K562 (cell line): ENCODE measurements at regions of chr6 and their contacts with region 1.

Region 1: GRCh38 chr6:35297601-35298481 is at the start of gene DEF6:
- DNase-seq: peak; percentile 94 to 97 (median 96)
- ATAC-seq: peak; percentile 96
- H3K4me3 ChIP-seq: peak within 1 kb of the TSS; percentile 65
- H3K27ac ChIP-seq: peak within 1 kb of the TSS; percentile 81
- H3K4me1 ChIP-seq: peaks cover 31 to 37% of the 10 kb centered on the region in 2 experiments
- H3K27me3 ChIP-seq: no peaks in the 10 kb centered on the region
- CTCF ChIP-seq: peak; percentile 97 to 99 (median 99)
- EP300 ChIP-seq: peak; percentile 89
- POLR2A ChIP-seq: peak; percentile 77
- RAD21 ChIP-seq: peak; percentile 100
- polyA plus RNA-seq, gene DEF6: 1.3 to 1.4 TPM

Region 2: DNA sequence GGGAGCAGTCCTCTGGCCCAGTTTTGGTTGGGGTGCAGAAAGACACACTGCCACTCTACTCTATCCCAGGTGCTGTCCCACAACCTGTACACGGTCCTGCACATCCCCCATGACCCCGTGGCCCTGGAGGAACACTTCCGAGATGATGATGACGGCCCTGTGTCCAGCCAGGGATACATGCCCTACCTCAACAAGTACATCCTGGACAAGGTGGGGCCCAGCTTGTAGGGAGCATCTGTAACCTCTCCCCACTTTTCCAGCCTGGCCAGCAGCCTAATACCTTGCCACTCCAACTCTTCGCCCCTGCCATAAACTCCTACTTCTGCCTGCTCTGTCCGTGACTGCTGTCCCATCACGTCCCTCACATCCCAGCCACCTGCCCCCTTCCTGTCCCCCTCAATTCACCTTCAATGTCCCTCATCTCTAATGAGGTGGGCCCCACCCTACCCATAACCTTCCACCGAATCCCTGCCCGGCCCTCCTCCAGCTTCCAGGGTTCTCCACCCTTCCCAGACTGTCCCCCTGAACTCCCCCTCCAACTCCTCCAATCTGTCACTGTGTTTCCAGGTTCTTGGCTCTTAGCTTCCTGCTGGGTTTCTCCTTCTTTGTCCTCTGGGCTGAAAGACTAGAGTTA is 11.9 kb after region 1 on chr6:
- CTCF ChIA-PET with region 1: interaction called, 3 read pairs
- POLR2A ChIA-PET with region 1: interaction called, 10 read pairs
- in situ Hi-C with region 1: no loop called
- intact Hi-C with region 1: no loop called
- DNase-seq: no peak
- ATAC-seq: no peak
- H3K4me3 ChIP-seq: no peak overlapping the region
- H3K27ac ChIP-seq: no peak overlapping the region
- H3K4me1 ChIP-seq: peaks cover 4 to 15% of the 10 kb centered on the region in 2 experiments; a peak in 4 of 5 replicates
- H3K27me3 ChIP-seq: no peaks in the 10 kb centered on the region
- CTCF ChIP-seq: no peak
- EP300 ChIP-seq: no peak
- POLR2A ChIP-seq: no peak
- RAD21 ChIP-seq: no peak

Region 3: DNA sequence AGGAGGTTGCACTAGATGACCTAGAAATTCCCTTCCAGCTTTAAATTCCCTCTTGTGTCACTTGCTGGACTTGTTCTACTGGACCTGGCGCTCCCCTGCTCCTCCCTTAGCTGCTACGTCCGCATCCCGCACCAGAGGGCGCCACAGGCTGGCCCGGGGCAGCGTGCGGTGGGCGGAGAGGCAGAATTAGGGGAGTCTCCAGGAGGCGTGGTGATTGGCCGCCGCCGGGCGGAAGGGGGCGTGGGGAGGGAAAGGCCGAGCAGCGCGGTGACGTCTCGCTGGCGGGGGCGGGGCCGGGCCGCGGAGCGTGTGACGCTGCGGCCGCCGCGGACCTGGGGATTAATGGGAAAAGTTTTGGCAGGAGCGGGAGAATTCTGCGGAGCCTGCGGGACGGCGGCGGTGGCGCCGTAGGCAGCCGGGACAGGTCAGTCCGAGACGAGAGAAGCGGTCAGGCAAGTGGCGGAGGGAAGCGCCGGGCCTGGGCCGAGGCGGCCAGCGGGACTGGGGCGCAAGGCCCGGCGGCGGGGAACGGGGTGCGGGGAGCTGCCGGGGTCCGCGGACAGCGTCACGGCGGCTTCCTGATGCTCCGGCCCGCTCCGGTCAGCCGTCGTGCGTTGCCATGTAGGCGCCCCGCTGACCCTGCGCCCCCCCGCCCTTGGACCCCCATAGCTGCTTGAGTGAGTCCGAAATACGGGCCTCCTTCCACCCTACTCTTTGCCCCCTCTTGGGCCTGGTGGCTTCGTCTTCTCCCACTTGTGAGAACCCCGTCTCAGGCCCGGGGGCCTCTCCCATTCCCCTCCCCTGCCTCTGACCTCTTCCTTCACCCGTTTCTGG is 44.6 kb after region 1 on chr6 and contains the start of gene PPARD:
- CTCF ChIA-PET with region 1: interaction called, 3 read pairs
- POLR2A ChIA-PET with region 1: interaction called, 5 read pairs
- in situ Hi-C with region 1: no loop called
- intact Hi-C with region 1: loop called (anchors 1 kb)
- DNase-seq: peak; percentile 99 to 100 (median 100)
- ATAC-seq: peak; percentile 97
- H3K4me3 ChIP-seq: peak within 1 kb of the TSS; percentile 73
- H3K27ac ChIP-seq: peak within 1 kb of the TSS; percentile 72
- H3K4me1 ChIP-seq: peaks cover 26 to 28% of the 10 kb centered on the region in 2 experiments; a peak in 4 of 5 replicates
- H3K27me3 ChIP-seq: peaks cover 0 to 6% of the 10 kb centered on the region in 2 experiments; a peak in 2 of 5 replicates
- CTCF ChIP-seq: peak; percentile 98 to 99 (median 99)
- EP300 ChIP-seq: peak; percentile 16; the same call in 1 of the 2 replicates
- POLR2A ChIP-seq: peak; percentile 65; the same call in 1 of the 2 replicates
- RAD21 ChIP-seq: peak; percentile 100
- polyA plus RNA-seq, gene PPARD: 0.14 to 0.18 TPM

Region 4: DNA sequence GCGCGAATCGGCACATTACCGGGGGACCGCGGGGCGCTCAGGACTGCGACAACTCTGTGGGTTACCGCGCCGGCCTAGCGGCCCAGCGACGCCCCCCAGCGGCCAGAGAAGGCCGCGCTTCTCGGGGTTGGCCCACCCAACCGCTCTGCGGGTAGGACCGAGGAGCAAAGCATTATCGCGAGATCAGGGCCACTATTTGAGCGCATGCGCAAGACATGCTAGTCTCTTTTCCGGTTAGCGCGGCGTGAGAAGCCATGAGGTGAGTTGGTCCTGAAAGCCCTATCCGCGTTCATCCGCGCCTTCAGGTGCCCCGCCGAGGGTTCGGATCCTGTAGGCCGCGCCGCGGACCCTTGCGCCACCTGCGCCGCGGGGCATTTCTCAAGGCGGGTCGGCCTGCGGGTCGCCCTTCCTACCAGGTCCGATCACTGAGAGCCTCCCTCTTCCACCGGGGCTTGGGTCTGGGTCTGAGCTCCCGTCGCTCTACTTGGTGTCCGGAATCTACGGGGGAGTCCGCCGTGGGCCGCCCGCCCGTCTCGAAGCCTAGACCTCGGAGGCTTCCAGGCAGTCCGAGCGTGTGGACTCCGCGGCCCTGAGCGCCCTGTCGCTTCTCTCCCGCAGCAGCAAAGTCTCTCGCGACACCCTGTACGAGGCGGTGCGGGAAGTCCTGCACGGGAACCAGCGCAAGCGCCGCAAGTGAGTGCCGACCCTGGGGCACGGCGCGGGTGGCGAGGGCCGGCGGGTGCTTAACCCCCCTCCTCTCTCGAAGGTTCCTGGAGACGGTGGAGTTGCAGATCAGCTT is 170.5 kb after region 1 on chr6 and contains the start of gene RPL10A:
- CTCF ChIA-PET with region 1: interaction called, 10 read pairs
- POLR2A ChIA-PET with region 1: interaction called, 14 read pairs
- in situ Hi-C with region 1: no loop called
- intact Hi-C with region 1: loop called (anchors 1 kb)
- DNase-seq: peak; percentile 94 to 99 (median 96)
- ATAC-seq: peak; percentile 88
- H3K4me3 ChIP-seq: peak within 1 kb of the TSS; percentile 91
- H3K27ac ChIP-seq: peak within 1 kb of the TSS; percentile 93
- H3K4me1 ChIP-seq: peaks cover 23 to 24% of the 10 kb centered on the region in 2 experiments; a peak in 4 of 5 replicates
- H3K27me3 ChIP-seq: no peaks in the 10 kb centered on the region; a peak in 1 of 5 replicates
- CTCF ChIP-seq: peak; percentile 97 to 99 (median 99)
- EP300 ChIP-seq: 0 out of 2 replicates have a peak, but pooled peaks have one; percentile 12
- POLR2A ChIP-seq: peak; percentile 100
- RAD21 ChIP-seq: peak; percentile 91 to 93
- polyA plus RNA-seq, gene RPL10A: 1,589 to 2,116 TPM

Region 5: DNA sequence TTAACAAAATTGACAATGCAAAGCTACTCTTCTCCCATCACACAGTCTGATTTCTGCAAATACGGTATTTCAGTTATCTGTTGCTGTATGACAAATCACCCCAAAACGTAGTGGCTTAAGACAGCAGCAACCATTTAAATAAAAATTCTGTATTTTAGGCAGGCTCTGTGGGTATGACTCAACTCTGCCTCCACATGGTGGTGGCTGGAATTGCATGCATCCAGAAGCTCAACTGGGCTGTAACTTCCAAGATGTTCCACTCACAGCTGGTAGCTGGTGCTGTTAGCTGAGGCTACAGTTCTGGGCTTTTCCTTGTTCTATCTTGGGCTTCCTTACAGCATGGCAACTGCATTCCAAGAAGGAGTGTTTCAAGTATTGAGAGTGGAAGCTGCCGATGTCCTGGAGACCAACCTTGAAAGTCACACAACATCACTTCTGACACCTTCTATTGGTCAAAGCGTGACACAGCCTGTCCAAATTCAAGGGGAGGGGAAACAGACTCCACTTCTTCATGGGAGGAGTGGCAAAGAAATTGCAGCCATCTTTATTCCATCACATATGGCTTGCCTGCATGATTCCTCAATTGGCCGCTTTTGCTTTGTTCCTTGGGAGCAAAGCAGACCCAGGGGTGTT is 254.6 kb after region 1 on chr6:
- CTCF ChIA-PET with region 1: interaction called, 3 read pairs
- POLR2A ChIA-PET with region 1: no interaction called
- in situ Hi-C with region 1: no loop called
- intact Hi-C with region 1: loop called (anchors 10 kb)
- DNase-seq: peak; percentile 52 to 83 (median 78)
- ATAC-seq: peak; percentile 80
- H3K4me3 ChIP-seq: no peak overlapping the region
- H3K27ac ChIP-seq: no peak overlapping the region
- H3K4me1 ChIP-seq: no peaks in the 10 kb centered on the region; a peak in 1 of 5 replicates
- H3K27me3 ChIP-seq: peaks cover 5 to 26% of the 10 kb centered on the region in 2 experiments; a peak in 4 of 5 replicates
- CTCF ChIP-seq: peak; percentile 79 to 94 (median 81)
- EP300 ChIP-seq: no peak
- POLR2A ChIP-seq: no peak
- RAD21 ChIP-seq: peak in 1 of 2 experiments; percentile 74; a peak in 2 of 4 replicates

Region 6: GRCh38 chr6:35955976-35956375 is 658.1 kb after region 1 on chr6:
- CTCF ChIA-PET with region 1: no interaction called
- POLR2A ChIA-PET with region 1: no interaction called
- in situ Hi-C with region 1: no loop called
- intact Hi-C with region 1: loop called (anchors 10 kb)
- DNase-seq: peak in 1 of 4 experiments; percentile 27
- ATAC-seq: peak; percentile 74
- H3K4me3 ChIP-seq: no peak overlapping the region
- H3K27ac ChIP-seq: no peak overlapping the region
- H3K4me1 ChIP-seq: no peaks in the 10 kb centered on the region
- H3K27me3 ChIP-seq: peaks cover 39 to 40% of the 10 kb centered on the region in 2 experiments
- CTCF ChIP-seq: peak; percentile 65 to 71 (median 69)
- EP300 ChIP-seq: no peak
- POLR2A ChIP-seq: no peak
- RAD21 ChIP-seq: peak; percentile 27 to 60; a peak in 3 of 4 replicates